A549 (cell line): ENCODE measurements at regions of chr1 and their contacts with region 1.

Region 1: DNA sequence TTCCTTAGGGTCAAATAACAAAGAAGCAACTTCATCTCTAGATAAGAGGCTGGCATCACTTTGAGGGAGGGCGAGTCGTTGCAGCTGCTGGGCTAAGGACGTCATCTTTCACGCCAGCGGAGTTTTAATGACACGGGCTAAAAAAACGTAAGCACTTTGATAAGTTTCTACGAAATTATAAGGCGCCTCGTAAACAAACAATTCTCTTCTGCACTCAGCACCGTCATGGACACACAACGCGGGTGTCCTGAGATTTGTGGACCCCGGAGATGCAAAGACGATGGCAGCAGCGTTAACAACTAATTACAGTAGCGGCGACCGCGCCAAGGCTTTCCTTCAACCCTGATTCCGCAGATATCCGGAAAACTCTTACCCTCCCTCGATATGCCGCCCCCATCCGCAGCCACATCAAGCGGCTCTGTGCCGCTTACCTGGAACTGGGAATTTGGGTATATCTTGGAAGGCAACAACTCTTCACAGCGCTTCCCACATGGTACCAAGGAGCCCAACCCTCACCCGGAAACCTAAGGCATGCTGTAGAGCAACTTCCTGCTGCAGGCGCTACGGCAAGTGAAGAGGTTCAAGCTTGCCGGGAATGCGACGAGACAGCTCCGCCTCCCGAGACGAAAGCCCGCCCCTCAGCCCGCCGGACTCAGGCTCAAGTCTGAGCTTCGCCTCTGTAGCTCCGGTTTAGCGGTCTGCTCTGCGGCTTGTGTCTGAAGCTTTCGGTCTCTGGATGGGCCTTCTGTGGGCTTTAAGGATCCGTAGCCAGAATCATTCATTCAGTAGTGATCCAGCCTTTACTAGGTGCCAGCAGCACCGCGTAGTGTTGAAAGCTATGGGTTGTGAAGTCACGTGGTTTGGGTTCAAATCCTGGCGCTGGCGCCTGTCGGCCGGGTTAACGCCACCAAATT is at the start of gene HEATR1:
- DNase-seq: peak; percentile 85 to 98
- ATAC-seq: peak; percentile 97 to 98
- H3K4me3 ChIP-seq: peak within 1 kb of the TSS; percentile 98
- H3K27ac ChIP-seq: peak within 1 kb of the TSS; percentile 87 to 93
- H3K4me1 ChIP-seq: peaks cover 12% of the 10 kb centered on the region
- CTCF ChIP-seq: no peak
- EP300 ChIP-seq: no peak
- POLR2A ChIP-seq: peak; percentile 66
- RAD21 ChIP-seq: no peak
- polyA plus RNA-seq, gene HEATR1: 45.4 and 50.1 TPM in 2 replicates

Region 2: GRCh38 chr1:236253918-236254637 is 350.2 kb before region 1 on chr1:
- CTCF ChIA-PET with region 1: no interaction called
- POLR2A ChIA-PET with region 1: no interaction called
- DNase-seq: no peak
- ATAC-seq: no peak
- H3K4me3 ChIP-seq: no peak overlapping the region
- H3K27ac ChIP-seq: no peak overlapping the region
- H3K4me1 ChIP-seq: no peaks in the 10 kb centered on the region
- CTCF ChIP-seq: no peak
- EP300 ChIP-seq: no peak
- POLR2A ChIP-seq: no peak
- RAD21 ChIP-seq: no peak

Region 3: GRCh38 chr1:236589531-236589930 is 14.7 kb before region 1 on chr1:
- CTCF ChIA-PET with region 1: no interaction called
- POLR2A ChIA-PET with region 1: no interaction called
- DNase-seq: no peak
- ATAC-seq: no peak
- H3K4me3 ChIP-seq: no peak overlapping the region
- H3K27ac ChIP-seq: no peak overlapping the region
- H3K4me1 ChIP-seq: no peaks in the 10 kb centered on the region
- CTCF ChIP-seq: no peak
- EP300 ChIP-seq: no peak
- POLR2A ChIP-seq: no peak
- RAD21 ChIP-seq: no peak

Region 4: DNA sequence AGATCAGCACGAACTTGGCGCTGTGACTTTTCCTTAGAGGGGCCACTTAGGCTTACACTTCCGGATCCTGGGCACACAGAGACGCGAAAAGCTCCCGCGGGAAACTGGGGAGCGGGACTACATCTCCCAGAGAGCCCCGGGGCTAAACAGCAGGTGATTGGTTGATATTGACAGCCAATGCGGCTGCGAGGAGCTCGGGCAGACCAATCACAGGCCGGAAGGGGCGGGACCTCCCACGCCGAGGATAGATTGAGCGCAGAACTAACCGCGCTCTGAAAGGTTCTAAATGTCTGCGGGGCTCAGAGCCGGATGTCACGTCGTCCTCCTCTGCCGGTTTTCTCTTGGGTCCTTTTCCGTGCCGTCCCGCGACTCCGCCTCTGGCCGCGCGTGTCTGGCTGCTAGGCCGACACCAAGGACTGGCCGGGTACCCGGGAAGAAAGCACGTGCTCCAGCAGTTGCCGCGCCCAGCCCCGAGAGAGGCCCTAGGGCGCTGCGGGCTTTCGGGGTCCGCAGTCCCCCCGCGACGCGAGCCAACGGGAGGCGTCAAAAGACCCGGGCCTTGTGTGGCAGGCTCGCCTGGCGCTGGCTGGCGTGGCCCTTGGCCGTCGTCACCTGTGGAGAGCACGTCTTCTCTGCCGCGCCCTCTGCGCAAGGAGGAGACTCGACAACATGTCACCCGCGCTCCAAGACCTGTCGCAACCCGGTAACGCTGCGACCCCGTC is 190.9 kb after region 1 on chr1 and contains the start of gene MTR:
- CTCF ChIA-PET with region 1: no interaction called
- POLR2A ChIA-PET with region 1: interaction called, 11 read pairs
- DNase-seq: peak; percentile 98 to 100
- ATAC-seq: peak; percentile 97 to 99
- H3K4me3 ChIP-seq: peak within 1 kb of the TSS; percentile 85
- H3K27ac ChIP-seq: peak within 1 kb of the TSS; percentile 82 to 97
- H3K4me1 ChIP-seq: peaks cover 9% of the 10 kb centered on the region; the same call in 1 of the 3 replicates
- CTCF ChIP-seq: no peak
- EP300 ChIP-seq: no peak
- POLR2A ChIP-seq: peak; percentile 56
- RAD21 ChIP-seq: no peak
- polyA plus RNA-seq, gene MTR: 12.7 and 14.4 TPM in 2 replicates

Region 5: DNA sequence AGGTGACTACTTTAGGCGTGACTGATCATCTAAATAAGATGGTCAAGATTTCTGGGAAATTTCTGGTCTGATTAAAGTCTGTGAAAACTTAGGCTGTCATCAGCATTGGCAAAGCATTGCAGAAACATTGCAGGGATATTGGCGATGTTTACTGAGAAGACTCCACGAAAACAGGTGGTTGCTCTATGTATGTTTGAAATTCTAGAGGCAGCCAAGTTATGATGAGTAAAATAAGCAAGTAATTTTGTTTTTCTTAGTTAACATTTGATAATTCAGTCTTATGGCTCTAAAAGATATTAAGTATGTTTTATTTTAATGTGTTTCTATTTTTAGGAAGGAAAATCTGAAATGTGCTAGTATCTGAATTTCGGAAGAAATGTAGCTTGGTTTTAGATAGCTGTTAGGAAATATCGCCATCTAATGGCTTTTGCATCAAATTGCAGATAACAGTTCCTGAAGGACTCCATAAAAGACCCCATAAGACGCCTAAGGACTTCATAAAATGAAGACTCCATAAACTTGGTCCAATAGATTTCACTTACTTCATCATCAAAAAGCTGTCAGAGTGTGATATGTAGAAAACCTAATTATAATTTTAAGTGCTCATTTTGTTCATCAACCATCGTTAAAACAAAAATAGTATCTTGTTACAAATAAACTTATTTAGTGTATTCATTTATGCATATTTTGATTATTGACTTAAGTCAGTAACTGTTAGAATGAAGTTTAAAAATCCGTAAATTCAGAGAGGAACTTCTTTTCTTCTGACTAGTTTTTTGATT is 782.3 kb after region 1 on chr1:
- CTCF ChIA-PET with region 1: interaction called, 21 read pairs
- POLR2A ChIA-PET with region 1: no interaction called
- DNase-seq: peak; percentile 15 to 26
- ATAC-seq: peak in 1 of 2 experiments; percentile 62; a peak in 3 of 6 replicates
- H3K4me3 ChIP-seq: no peak overlapping the region
- H3K27ac ChIP-seq: no peak overlapping the region
- H3K4me1 ChIP-seq: no peaks in the 10 kb centered on the region
- CTCF ChIP-seq: peak; percentile 80
- EP300 ChIP-seq: no peak
- POLR2A ChIP-seq: no peak
- RAD21 ChIP-seq: peak; percentile 72 to 74

Region 6: DNA sequence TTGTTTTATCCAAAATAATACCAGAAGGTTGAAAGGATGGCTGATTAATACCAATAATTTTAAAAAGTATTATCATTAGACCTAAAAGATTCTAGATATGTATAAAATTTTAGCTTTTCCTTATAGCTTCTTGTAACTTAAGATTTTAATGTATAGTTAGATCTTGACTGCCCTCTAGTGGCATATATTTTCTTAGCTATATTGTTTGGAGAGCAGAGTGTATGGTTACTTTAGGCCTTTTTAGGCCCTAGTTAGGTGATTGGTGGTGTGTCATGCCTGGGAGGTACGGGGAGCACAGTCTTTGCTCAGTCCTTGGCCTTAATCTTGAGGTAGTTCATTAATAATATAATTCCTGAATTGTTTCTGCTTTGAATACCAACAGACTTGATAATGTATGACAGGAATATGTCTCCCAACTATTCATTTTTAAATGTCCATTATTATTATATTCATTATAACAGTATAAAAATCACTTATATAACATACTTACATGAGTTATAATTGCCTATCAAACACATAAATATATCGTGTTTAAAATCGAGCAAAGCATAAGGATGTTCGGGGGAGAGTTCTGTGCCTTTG is 958.1 kb after region 1 on chr1:
- CTCF ChIA-PET with region 1: interaction called, 15 read pairs
- POLR2A ChIA-PET with region 1: no interaction called
- DNase-seq: peak; percentile 31 to 75
- ATAC-seq: peak; percentile 91 to 94
- H3K4me3 ChIP-seq: no peak overlapping the region
- H3K27ac ChIP-seq: no peak overlapping the region
- H3K4me1 ChIP-seq: no peaks in the 10 kb centered on the region
- CTCF ChIP-seq: peak; percentile 70
- EP300 ChIP-seq: no peak
- POLR2A ChIP-seq: no peak
- RAD21 ChIP-seq: peak; percentile 68 to 69